ENCODE measurements at regions of chr4 and their contacts with region 1.

Region 1: DNA sequence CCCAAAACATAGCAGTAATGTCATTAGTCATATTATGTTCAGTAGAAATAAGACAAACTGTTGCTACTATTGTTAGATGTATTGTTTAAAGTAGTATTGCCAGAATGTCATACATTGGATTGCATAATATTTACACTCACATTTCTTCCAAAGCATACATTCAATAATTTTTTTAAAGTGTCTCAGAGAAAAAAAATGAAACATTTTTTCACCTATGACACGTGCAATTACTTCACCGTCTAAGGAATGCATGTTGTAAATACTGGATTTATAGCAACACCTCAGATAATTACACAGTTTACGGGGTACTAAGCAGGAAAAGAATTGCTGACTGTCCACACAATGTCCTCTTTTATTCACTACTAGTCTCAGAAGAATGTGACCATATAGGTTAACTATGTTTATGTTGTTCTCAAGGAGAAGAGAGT is 162.1 kb downstream of the PCDH18 start:
- DNase-seq: no peak
- ATAC-seq: no peak
- H3K4me3 ChIP-seq: no peak overlapping the region
- H3K27ac ChIP-seq: no peak overlapping the region
- H3K4me1 ChIP-seq: peaks cover 3 to 8% of the 10 kb centered on the region in 2 donors
- H3K27me3 ChIP-seq: no peaks in the 10 kb centered on the region

Region 2: GRCh38 chr4:137267024-137267423 is 103.2 kb before region 1 on chr4:
- intact Hi-C with region 1: loop called in 1 of 2 experiments (anchors 10 kb)
- DNase-seq: no peak
- ATAC-seq: peak; percentile 87
- H3K4me3 ChIP-seq: no peak overlapping the region
- H3K27ac ChIP-seq: peak overlapping the region in 1 of 2 donors; percentile 57
- H3K4me1 ChIP-seq: peaks cover 2 to 3% of the 10 kb centered on the region in 2 donors
- H3K27me3 ChIP-seq: no peaks in the 10 kb centered on the region

Region 3: DNA sequence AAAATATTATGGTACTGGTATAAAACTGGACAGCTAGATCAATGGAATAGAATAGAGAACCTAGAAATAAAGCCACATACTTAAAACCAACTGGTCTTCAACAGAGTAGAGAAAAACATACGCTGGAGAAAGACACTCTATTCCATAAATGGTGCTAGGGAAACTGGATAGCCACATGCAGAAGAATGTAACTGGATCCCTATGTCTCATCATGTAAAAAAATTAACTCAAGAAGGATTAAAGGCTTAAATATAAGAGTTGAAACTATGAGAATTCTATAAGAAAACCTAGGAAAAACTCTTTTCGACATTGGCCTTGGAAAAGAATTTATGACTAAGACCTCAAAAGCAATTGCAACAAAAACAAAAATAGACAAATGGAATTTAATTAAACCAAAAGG is 47.5 kb after region 1 on chr4:
- intact Hi-C with region 1: no loop called
- DNase-seq: no peak
- ATAC-seq: no peak
- H3K4me3 ChIP-seq: no peak overlapping the region
- H3K27ac ChIP-seq: no peak overlapping the region
- H3K4me1 ChIP-seq: no peaks in the 10 kb centered on the region
- H3K27me3 ChIP-seq: no peaks in the 10 kb centered on the region

Region 4: DNA sequence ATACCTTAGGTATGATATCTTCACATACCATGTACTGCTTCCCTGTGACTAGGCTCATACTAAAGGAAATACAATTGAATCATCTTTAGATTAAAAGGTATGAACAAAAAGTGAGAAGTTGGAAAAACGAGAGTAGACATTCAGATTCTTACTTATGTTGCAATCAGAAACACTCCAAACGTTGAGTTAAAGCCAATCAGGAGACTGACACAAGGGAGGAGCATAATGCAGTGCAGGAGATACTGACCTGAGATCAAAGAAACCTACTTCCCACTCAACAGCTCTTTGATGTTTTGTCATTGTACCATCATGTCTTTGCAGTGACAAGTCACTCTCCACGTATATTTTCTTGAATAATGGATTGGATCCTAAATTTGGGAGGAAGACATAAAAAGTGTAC is 171.0 kb after region 1 on chr4:
- intact Hi-C with region 1: no loop called
- DNase-seq: no peak
- ATAC-seq: no peak
- H3K4me3 ChIP-seq: no peak overlapping the region
- H3K27ac ChIP-seq: no peak overlapping the region
- H3K4me1 ChIP-seq: no peaks in the 10 kb centered on the region
- H3K27me3 ChIP-seq: no peaks in the 10 kb centered on the region

Region 5: GRCh38 chr4:137623013-137623412 is 252.8 kb after region 1 on chr4:
- intact Hi-C with region 1: no loop called
- DNase-seq: no peak
- ATAC-seq: no peak
- H3K4me3 ChIP-seq: no peak overlapping the region
- H3K27ac ChIP-seq: no peak overlapping the region
- H3K4me1 ChIP-seq: no peaks in the 10 kb centered on the region
- H3K27me3 ChIP-seq: no peaks in the 10 kb centered on the region

Measured in aorta (tissue), 5 donors.